Dendritic cell treated with granulocyte-macrophage colony-stimulating factor and Interleukin-4, amounts not matched to agents 40 ng/mL and 50 ng/mL, for 4 days (primary cell): ENCODE measurements at regions of chr7 and their contacts with region 1.

Region 1: GRCh38 chr7:47818796-47819606 is 129.3 kb downstream of the PKD1L1 start:
- H3K4me3 Mint-ChIP-seq: no peak overlapping the region
- H3K27ac Mint-ChIP-seq: no peak overlapping the region
- H3K4me1 Mint-ChIP-seq: peaks cover 21% of the 10 kb centered on the region
- H3K27me3 Mint-ChIP-seq: no peaks in the 10 kb centered on the region

Region 2: DNA sequence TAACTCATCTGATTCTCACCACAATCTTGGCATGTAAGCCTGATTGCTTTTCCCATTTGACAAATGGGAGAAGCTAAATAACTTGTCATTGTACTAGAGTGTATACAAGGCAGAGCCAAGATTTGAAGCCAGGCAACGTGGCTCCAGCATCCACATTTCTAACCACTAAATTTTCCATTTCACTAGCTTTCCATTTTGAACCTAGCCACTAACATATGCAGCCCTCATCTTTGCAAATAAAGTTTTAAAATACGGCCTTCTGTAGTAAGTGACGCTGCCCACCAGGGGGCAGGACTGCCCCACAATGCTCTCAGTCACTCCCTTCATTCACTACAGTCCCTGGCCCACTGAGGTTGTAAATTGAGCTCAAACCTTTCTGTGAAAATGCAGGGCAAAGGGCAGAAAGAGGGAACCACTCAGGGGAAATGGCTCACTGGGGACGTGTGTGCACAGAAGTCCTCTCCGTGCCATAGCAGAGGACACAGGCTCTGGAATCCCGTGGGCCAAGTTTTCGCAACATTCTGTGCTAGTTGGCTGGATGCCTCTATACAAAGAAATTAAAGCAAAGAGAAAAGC is 552.8 kb before region 1 on chr7:
- intact Hi-C with region 1: loop called (anchors 1 kb)
- H3K4me3 Mint-ChIP-seq: no peak overlapping the region
- H3K27ac Mint-ChIP-seq: no peak overlapping the region
- H3K4me1 Mint-ChIP-seq: peaks cover 6% of the 10 kb centered on the region
- H3K27me3 Mint-ChIP-seq: no peaks in the 10 kb centered on the region

Region 3: DNA sequence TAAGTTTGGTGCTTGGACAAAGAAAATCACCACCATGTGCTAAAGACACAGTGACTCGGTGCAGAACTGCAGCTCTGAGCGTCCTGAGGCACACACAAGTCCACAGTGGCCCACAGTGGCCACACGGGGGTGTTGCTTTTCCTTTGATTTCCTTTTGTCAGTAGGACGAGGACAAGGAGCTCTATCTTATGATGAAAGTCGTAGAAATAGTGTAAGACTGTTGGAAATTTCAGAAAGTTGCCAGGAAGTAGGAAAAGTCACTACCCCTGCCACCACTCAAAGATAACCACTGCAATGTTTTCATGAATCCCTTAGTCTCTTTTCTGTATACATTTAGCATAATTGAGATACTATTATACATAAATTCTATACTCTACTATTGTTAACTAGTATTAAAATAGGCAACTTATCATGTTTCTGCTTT is 383.1 kb before region 1 on chr7:
- intact Hi-C with region 1: loop called (anchors 2 kb)
- H3K4me3 Mint-ChIP-seq: no peak overlapping the region
- H3K27ac Mint-ChIP-seq: no peak overlapping the region
- H3K4me1 Mint-ChIP-seq: peaks cover 4% of the 10 kb centered on the region
- H3K27me3 Mint-ChIP-seq: no peaks in the 10 kb centered on the region

Region 4: GRCh38 chr7:47581806-47582763 is 236.9 kb before region 1 on chr7 and contains the start of gene TNS3:
- intact Hi-C with region 1: loop called (anchors 10 kb)
- H3K4me3 Mint-ChIP-seq: peak within 1 kb of the TSS; percentile 100
- H3K27ac Mint-ChIP-seq: peak within 1 kb of the TSS; percentile 96
- H3K4me1 Mint-ChIP-seq: peaks cover 81% of the 10 kb centered on the region
- H3K27me3 Mint-ChIP-seq: peaks cover 11% of the 10 kb centered on the region

Region 5: DNA sequence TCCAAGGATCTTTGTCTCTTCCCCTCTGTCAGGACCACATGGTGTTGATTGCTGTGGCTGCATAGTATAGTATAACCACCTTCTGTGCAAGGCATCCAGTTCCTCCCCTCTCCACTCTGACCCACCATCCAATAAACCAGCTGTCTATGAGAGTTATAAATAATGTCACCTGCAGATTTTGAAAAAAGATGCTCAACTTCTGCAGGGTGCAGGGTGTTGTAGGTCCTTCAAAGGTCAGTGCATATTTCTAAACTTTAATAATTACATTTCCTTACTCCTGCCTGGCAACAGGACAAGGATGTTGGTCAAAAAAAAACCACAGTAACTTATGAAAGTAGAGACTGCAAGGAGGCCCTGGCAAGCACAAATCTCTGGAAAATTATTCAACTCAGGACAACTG is 37.0 kb before region 1 on chr7:
- intact Hi-C with region 1: no loop called
- H3K4me3 Mint-ChIP-seq: no peak overlapping the region
- H3K27ac Mint-ChIP-seq: no peak overlapping the region
- H3K4me1 Mint-ChIP-seq: peaks cover 2% of the 10 kb centered on the region
- H3K27me3 Mint-ChIP-seq: no peaks in the 10 kb centered on the region

Region 6: DNA sequence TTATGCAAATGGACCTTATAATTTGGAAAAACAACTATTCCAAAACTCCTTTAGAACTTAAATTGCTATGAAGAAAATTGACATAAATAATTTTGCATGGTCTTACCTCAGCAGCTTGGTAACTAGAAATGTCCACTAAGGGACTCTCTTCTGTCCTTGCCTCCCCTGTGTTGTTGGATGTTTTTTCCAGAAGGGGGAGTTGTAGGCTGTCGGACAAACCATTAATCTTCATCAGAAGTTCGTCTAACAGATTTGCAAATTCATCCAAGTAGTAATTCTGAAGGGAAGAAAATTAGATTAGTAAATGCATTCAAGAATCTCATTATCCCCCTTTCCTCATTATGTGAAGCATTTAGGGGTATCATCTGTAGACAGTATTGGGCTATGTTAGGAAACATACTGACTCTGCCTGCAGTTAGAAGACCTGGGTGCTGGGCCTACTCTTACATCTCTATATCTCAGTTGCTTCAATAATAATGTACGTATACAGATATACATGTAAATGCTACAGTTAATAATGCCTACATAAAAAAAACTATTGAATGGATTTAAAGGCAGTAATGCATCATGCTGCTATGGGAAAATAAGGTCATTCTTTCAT is 26.4 kb before region 1 on chr7:
- intact Hi-C with region 1: loop called (anchors 1 kb)
- H3K4me3 Mint-ChIP-seq: no peak overlapping the region
- H3K27ac Mint-ChIP-seq: no peak overlapping the region
- H3K4me1 Mint-ChIP-seq: peaks cover 7% of the 10 kb centered on the region
- H3K27me3 Mint-ChIP-seq: no peaks in the 10 kb centered on the region